ENCODE measurements at regions of chr6 and their contacts with region 1.

Region 1: DNA sequence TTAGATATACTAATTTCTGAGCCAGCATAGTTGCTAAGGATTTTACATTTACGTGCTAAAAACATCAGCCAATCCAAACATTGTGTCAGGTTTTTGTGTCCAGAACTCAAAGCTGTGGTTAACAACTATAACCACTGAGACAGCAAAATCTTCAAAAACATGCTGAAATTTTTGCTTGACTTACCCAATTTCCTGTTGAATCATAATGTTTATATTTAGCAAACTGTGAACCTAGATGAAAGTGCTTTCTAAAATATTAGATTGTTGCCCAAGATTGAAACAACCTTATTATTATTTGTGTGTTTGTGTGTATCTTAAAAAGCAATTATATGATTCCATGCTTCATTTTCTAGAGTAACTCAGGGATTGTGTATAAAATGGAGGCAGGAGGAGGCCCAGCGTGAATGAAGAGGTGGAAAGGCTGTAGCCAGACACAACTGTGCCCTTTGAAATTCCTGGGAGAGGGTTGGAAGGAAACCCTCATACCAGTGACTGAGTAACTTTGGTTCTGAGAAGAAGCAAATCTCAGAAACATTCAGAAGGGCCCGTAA is 48.0 kb downstream of the ARMC2 start:
- DNase-seq: no peak
- H3K4me3 ChIP-seq: no peak overlapping the region
- H3K4me3 Mint-ChIP-seq: no peak overlapping the region
- H3K27ac Mint-ChIP-seq: no peak overlapping the region
- H3K4me1 ChIP-seq: peaks cover 10% of the 10 kb centered on the region
- H3K4me1 Mint-ChIP-seq: peaks cover 15% of the 10 kb centered on the region
- H3K27me3 ChIP-seq: no peaks in the 10 kb centered on the region
- H3K27me3 Mint-ChIP-seq: no peaks in the 10 kb centered on the region
- CTCF ChIP-seq: no peak

Region 2: GRCh38 chr6:108541838-108542759 is 354.1 kb before region 1 on chr6:
- CTCF ChIA-PET with region 1: interaction called, 33 read pairs
- POLR2A ChIA-PET with region 1: no interaction called
- intact Hi-C with region 1: no loop called
- DNase-seq: peak; percentile 67 to 74
- H3K4me3 ChIP-seq: peak overlapping the region; percentile 1; the same call in 1 of the 2 replicates
- H3K4me3 Mint-ChIP-seq: peak overlapping the region; percentile 55
- H3K27ac Mint-ChIP-seq: no peak overlapping the region
- H3K4me1 ChIP-seq: no peaks in the 10 kb centered on the region
- H3K4me1 Mint-ChIP-seq: no peaks in the 10 kb centered on the region
- H3K27me3 ChIP-seq: no peaks in the 10 kb centered on the region
- H3K27me3 Mint-ChIP-seq: no peaks in the 10 kb centered on the region
- CTCF ChIP-seq: peak; percentile 76 to 85

Region 3: GRCh38 chr6:108782179-108783041 is 113.8 kb before region 1 on chr6:
- CTCF ChIA-PET with region 1: interaction called, 3 read pairs
- POLR2A ChIA-PET with region 1: no interaction called
- intact Hi-C with region 1: loop called (anchors 5 kb)
- DNase-seq: peak; percentile 84 to 86
- H3K4me3 ChIP-seq: peak overlapping the region; percentile 30
- H3K4me3 Mint-ChIP-seq: peak overlapping the region; percentile 69
- H3K27ac Mint-ChIP-seq: no peak overlapping the region
- H3K4me1 ChIP-seq: 0 out of 2 replicates have a peak, but pooled peaks cover 7% of the 10 kb centered on the region
- H3K4me1 Mint-ChIP-seq: peaks cover 21% of the 10 kb centered on the region
- H3K27me3 ChIP-seq: no peaks in the 10 kb centered on the region
- H3K27me3 Mint-ChIP-seq: no peaks in the 10 kb centered on the region
- CTCF ChIP-seq: peak; percentile 72 to 92

Region 4: DNA sequence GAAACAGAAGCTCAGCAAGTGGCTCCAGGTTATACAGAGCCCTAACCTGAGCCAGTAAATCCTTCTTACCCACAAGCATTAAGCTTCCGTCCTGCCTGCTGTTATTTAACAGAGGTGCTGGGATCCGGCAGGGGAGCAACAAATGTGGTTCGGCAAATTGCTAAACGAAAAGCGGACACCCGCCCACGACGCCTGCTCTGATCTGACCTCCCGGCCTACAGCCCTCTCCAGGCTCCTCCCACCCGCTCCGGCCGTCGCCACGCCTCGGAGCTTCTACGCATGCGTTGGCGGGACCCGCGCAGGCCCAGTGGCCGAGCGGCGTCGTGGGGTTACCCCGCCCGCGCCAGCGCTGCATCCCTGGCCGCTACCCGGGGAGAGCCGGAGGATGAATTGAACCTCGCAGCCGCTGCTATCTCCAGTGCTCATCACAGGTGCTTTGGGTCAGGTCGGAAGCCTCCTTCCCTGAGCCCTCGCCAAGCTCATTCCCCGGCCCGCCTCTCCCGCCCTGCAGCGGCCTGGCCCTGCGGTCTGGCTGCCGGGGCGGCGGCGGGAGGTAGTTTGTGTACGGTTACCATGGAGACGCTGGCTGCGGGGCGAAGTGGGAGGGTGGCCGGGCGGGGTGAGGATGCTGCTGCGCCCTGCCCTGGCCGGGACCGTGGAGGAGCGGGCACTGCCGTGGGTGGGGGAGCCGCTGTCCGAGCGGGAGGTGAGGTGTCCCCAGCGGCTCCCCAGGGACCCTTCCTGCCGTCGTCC is 47.9 kb before region 1 on chr6 and contains the start of gene ARMC2:
- CTCF ChIA-PET with region 1: interaction called, 17 read pairs
- POLR2A ChIA-PET with region 1: no interaction called
- intact Hi-C with region 1: no loop called
- DNase-seq: peak; percentile 89 to 96
- H3K4me3 ChIP-seq: peak within 1 kb of the TSS; percentile 63
- H3K4me3 Mint-ChIP-seq: peak within 1 kb of the TSS; percentile 80
- H3K27ac Mint-ChIP-seq: peak within 1 kb of the TSS; percentile 85
- H3K4me1 ChIP-seq: no peaks in the 10 kb centered on the region
- H3K4me1 Mint-ChIP-seq: peaks cover 6% of the 10 kb centered on the region
- H3K27me3 ChIP-seq: no peaks in the 10 kb centered on the region
- H3K27me3 Mint-ChIP-seq: no peaks in the 10 kb centered on the region
- CTCF ChIP-seq: no peak
- total RNA-seq, gene ARMC2: 6.1 and 7.8 TPM in 2 replicates

Region 5: GRCh38 chr6:108883172-108883571 is 13.0 kb before region 1 on chr6:
- CTCF ChIA-PET with region 1: no interaction called
- POLR2A ChIA-PET with region 1: no interaction called
- intact Hi-C with region 1: no loop called
- DNase-seq: no peak
- H3K4me3 ChIP-seq: no peak overlapping the region
- H3K4me3 Mint-ChIP-seq: no peak overlapping the region
- H3K27ac Mint-ChIP-seq: no peak overlapping the region
- H3K4me1 ChIP-seq: no peaks in the 10 kb centered on the region
- H3K4me1 Mint-ChIP-seq: no peaks in the 10 kb centered on the region
- H3K27me3 ChIP-seq: no peaks in the 10 kb centered on the region
- H3K27me3 Mint-ChIP-seq: no peaks in the 10 kb centered on the region
- CTCF ChIP-seq: no peak